ENCODE measurements at regions of chr2 and their contacts with region 1.

Region 1: GRCh38 chr2:153519257-153519875 is 40.8 kb upstream of the RPRM start:
- H3K4me3 ChIP-seq: no peak overlapping the region
- H3K27ac ChIP-seq: no peak overlapping the region
- H3K4me1 ChIP-seq: no peaks in the 10 kb centered on the region
- CTCF ChIP-seq: no peak; the same call in 1 of the 2 replicates

Region 2: DNA sequence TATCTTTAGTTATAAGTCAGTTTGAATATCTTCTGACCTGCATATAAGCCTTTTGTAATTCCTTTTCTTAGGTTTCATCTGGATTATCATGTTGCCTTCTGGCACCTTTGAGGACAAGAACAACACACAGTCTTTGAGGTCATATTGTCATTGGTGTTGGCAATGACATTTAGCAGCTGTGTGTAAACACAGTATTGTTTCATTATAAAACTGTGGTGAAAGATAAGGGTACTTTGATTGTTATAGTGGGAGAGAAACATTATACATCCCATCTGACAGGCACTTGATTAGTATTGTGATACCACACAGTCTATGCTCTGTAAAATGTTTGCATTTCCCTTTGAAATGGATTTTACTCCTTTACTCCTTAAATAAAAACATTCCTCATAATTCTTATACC is 354.3 kb before region 1 on chr2:
- CTCF ChIA-PET with region 1: interaction called, 11 read pairs
- POLR2A ChIA-PET with region 1: no interaction called
- H3K4me3 ChIP-seq: no peak overlapping the region
- H3K27ac ChIP-seq: no peak overlapping the region
- H3K4me1 ChIP-seq: no peaks in the 10 kb centered on the region
- CTCF ChIP-seq: no peak

Region 3: GRCh38 chr2:153478334-153479261 is 40.8 kb before region 1 on chr2 and contains the start of gene RPRM:
- CTCF ChIA-PET with region 1: interaction called, 11 read pairs
- POLR2A ChIA-PET with region 1: no interaction called
- H3K4me3 ChIP-seq: peak within 1 kb of the TSS; percentile 95
- H3K27ac ChIP-seq: peak within 1 kb of the TSS; percentile 98
- H3K4me1 ChIP-seq: peaks cover 23% of the 10 kb centered on the region
- CTCF ChIP-seq: peak; percentile 54